ENCODE measurements at regions of chr14 and their contacts with region 1.

Region 1: DNA sequence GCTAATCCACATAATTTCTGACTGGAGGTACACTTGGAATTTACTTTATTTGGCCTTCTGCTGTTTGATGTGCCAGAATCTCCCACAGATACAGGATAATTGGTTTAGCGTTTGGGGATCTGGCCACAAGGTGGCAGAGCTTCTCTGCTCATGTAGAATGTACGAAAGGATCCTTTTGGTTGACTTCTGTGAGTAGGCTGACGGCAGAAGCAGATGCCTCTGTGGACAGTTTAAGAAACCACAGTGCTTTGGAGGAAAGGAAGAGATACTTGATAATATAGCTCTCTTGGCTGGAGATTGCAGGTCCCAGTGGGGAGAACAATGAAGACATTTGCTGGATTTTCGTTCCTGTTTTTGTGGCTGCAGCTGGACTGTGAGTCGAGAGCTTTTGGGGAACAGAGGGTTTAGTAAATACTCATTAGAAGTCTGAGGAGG is 75.3 kb upstream of the OR4E1 start:
- DNase-seq: peak; percentile 68
- ATAC-seq: peak; percentile 90
- H3K4me3 Mint-ChIP-seq: peak overlapping the region; percentile 51
- H3K27ac Mint-ChIP-seq: peak overlapping the region; percentile 64
- H3K4me1 Mint-ChIP-seq: peaks cover 8% of the 10 kb centered on the region
- H3K27me3 Mint-ChIP-seq: peaks cover 18% of the 10 kb centered on the region

Region 2: DNA sequence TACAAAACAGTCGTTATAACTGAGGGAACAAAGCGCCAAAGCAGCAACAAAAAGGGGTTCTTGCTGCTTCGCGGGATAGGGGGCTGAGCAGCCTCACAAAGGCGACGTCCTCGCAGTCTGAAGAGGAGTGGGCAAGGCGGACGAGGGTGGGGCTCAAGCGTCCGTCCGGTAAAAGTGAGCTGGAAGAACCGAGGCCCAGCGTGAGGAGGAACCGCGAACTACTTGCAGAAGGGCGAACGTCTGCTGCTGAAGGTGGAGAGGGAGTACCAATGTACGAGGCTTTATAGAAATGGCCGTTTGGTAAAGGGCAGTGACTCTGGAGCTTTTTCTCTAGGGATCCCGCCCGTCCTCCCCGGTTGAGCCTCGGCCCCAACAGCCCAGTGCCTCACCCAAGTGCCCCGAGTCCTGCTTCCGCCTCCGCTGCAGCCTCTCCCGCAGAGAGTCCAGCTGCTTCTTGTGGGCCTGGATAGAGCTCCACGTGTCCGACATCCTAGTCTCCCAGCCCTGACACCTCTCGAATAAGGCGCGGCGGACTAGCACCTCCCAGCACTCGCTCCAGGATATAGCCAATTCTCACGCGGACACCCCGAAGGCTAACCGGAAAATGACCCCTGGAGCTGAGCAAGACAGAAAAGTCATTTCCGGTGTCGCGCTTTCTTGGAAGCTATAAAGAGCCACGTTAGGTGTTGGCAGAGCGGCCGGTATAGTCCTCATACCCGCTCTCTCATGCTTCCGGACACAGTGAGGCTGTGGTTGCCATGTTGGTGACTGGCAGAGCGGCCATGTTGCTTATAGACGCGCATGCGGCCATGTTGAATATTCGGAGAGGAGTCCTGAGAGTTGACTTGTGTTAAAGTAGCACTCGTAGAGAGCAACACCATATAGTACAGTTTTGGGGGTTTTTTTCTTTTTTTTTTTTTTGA is 237.9 kb before region 1 on chr14 and contains the start of gene METTL3:
- CTCF ChIA-PET with region 1: no interaction called
- POLR2A ChIA-PET with region 1: no interaction called
- DNase-seq: peak; percentile 97
- ATAC-seq: peak; percentile 99
- H3K4me3 Mint-ChIP-seq: peak within 1 kb of the TSS; percentile 96
- H3K27ac Mint-ChIP-seq: peak within 1 kb of the TSS; percentile 99
- H3K4me1 Mint-ChIP-seq: peaks cover 32% of the 10 kb centered on the region
- H3K27me3 Mint-ChIP-seq: peaks cover 6% of the 10 kb centered on the region
- total RNA-seq, gene METTL3: 68.3 to 70.8 TPM

Region 3: DNA sequence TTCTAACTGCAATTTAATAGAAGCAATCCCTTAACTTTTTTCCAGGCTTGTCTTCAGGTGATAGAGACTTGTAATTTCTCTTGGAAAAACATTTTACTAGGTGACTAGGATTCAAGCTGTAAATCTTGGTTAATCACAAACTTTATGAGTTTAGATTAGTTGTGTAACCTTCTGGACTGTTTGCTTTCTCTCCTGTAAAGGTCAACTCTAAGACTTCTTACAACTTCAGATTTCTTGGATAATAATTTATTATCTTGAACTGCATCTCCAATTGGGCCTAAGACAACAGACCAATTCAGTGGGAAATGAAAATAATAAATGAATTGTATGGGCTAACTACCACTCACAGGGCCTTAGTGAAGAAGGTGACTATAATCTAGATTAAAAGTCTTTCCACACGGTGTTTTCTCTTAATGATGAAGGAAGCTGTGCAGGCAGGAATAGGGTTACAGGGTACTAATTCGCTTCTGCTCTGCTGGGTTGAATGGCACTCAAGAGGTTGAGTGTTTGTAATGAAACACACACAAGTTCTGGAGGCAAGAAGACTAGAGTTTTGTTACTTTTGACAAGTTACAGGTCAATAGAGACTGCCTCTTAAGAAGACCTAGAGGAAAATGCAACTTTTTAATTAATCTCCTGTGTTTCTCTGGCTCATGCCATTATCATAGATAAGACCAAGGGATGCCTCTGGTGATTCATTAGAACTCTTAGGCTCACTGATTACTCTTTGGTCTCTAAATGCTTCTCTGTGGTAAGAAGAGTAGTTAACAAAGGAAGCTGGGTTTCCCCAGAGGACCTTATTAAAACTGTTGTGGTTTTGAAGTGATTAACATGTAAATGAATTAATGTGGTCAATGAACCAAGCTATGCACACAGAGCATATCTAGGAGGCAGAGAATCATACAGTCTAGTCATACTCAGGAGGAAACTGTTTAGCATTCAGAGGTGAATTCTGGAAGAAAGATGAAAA is 45.2 kb before region 1 on chr14:
- CTCF ChIA-PET with region 1: no interaction called
- POLR2A ChIA-PET with region 1: no interaction called
- DNase-seq: no peak
- ATAC-seq: peak; percentile 51
- H3K4me3 Mint-ChIP-seq: no peak overlapping the region
- H3K27ac Mint-ChIP-seq: no peak overlapping the region
- H3K4me1 Mint-ChIP-seq: peaks cover 14% of the 10 kb centered on the region
- H3K27me3 Mint-ChIP-seq: peaks cover 24% of the 10 kb centered on the region

Region 4: GRCh38 chr14:21734457-21735074 is 14.3 kb before region 1 on chr14:
- CTCF ChIA-PET with region 1: interaction called, 20 read pairs
- POLR2A ChIA-PET with region 1: interaction called, 5 read pairs
- DNase-seq: peak; percentile 68
- ATAC-seq: peak; percentile 41
- H3K4me3 Mint-ChIP-seq: peak overlapping the region; percentile 64
- H3K27ac Mint-ChIP-seq: no peak overlapping the region
- H3K4me1 Mint-ChIP-seq: peaks cover 13% of the 10 kb centered on the region
- H3K27me3 Mint-ChIP-seq: peaks cover 25% of the 10 kb centered on the region

Region 5: DNA sequence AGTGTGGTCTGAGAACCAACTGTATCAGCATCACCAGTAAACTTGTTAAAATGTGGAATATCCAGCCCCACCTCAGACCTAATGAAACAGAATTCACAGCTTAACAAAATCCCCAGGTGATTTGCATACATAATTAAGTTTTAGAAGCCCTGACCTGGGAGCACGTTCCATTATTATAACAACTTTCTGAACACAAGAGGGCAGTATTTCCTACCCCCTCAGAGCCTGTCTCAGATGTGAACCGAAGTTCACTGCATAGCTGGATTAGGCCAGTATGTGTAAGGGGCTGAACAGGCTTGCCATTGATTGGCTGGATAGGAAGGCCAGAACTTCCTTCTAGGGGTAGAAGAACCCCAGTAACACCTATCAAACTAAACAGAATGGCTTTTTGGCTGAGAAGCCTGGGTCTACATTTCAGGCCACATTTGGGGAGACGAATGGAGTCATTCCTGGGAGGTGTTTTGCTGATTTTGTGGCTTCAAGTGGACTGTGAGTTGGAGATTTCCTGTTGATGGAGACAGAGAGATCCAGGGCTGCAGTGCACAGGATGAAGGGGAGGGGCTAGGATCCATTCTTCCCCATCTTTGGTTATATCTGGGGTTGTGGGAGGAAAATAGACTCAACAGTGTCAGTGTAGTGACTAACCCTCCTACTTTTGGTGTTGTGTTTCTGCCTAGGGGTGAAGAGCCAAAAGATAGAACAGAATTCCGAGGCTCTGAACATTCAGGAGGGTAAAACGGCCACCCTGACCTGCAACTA is 19.4 kb after region 1 on chr14:
- CTCF ChIA-PET with region 1: interaction called, 17 read pairs
- POLR2A ChIA-PET with region 1: no interaction called
- DNase-seq: peak; percentile 46
- ATAC-seq: peak; percentile 93
- H3K4me3 Mint-ChIP-seq: peak overlapping the region; percentile 39
- H3K27ac Mint-ChIP-seq: peak overlapping the region; percentile 62
- H3K4me1 Mint-ChIP-seq: no peaks in the 10 kb centered on the region
- H3K27me3 Mint-ChIP-seq: peaks cover 25% of the 10 kb centered on the region

Region 6: GRCh38 chr14:21825149-21825743 is 76.4 kb after region 1 on chr14:
- CTCF ChIA-PET with region 1: interaction called, 11 read pairs
- POLR2A ChIA-PET with region 1: no interaction called
- DNase-seq: peak; percentile 62
- ATAC-seq: peak; percentile 95
- H3K4me3 Mint-ChIP-seq: peak overlapping the region; percentile 35
- H3K27ac Mint-ChIP-seq: no peak overlapping the region
- H3K4me1 Mint-ChIP-seq: peaks cover 4% of the 10 kb centered on the region
- H3K27me3 Mint-ChIP-seq: peaks cover 35% of the 10 kb centered on the region